ENCODE measurements at regions of chr3 and their contacts with region 1.

Region 1: DNA sequence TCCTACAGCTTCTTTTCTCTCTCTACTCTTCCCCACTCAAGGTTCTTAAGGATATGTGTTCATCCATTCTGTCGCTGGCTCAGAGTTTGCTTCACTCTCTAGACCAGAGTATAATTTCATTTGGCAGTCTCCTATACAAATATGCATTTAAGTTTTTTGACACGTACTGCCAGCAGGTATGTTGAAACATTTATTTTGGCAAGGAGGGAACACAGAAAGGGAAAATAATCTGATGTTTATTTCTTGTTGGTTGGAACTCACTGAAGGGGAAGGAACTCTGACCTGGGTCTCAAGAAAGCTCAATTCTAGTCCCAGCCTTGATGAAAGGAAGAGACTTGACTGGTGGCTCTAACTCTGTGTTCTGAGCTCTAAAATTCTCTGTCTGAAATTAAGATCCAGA is 21.6 kb downstream of the FANCD2 start:
- DNase-seq: no peak
- H3K4me3 ChIP-seq: no peak overlapping the region
- H3K27ac ChIP-seq: no peak overlapping the region
- H3K4me1 ChIP-seq: no peaks in the 10 kb centered on the region
- H3K27me3 ChIP-seq: no peaks in the 10 kb centered on the region
- CTCF ChIP-seq: no peak
- EP300 ChIP-seq: no peak
- POLR2A ChIP-seq: no peak

Region 2: GRCh38 chr3:11392014-11392859 is 1344.4 kb after region 1 on chr3:
- intact Hi-C with region 1: no loop called
- DNase-seq: peak in 1 of 5 donors; percentile 45
- H3K4me3 ChIP-seq: no peak overlapping the region
- H3K27ac ChIP-seq: no peak overlapping the region
- H3K4me1 ChIP-seq: peaks cover 13% of the 10 kb centered on the region
- H3K27me3 ChIP-seq: no peaks in the 10 kb centered on the region
- CTCF ChIP-seq: no peak
- EP300 ChIP-seq: no peak
- POLR2A ChIP-seq: no peak

Region 3: DNA sequence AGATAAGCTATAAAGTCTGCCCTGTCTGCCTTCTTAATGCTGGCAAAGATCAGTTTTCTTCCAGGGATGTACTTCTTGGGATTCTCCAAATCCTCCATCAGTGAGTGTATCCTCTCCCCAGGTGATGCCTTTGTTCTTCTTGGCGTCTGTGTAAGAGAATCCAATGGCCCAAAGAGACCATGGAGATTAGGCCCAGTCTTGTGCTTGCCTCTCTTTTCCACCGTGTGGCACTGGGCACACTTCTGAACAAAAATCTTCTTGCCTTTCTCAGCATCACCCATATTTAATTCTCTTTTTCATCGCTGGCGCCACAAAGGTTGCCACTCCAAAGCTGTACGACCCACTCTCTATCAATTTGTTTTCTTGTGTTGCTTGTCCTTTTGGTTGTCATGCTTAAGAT is 1831.0 kb after region 1 on chr3:
- intact Hi-C with region 1: loop called in 1 of 4 experiments (anchors 5 kb)
- DNase-seq: no peak
- H3K4me3 ChIP-seq: no peak overlapping the region
- H3K27ac ChIP-seq: no peak overlapping the region
- H3K4me1 ChIP-seq: no peaks in the 10 kb centered on the region
- H3K27me3 ChIP-seq: no peaks in the 10 kb centered on the region
- CTCF ChIP-seq: no peak
- EP300 ChIP-seq: no peak
- POLR2A ChIP-seq: no peak